ENCODE measurements at regions of chr6 and their contacts with region 1.

Region 1: DNA sequence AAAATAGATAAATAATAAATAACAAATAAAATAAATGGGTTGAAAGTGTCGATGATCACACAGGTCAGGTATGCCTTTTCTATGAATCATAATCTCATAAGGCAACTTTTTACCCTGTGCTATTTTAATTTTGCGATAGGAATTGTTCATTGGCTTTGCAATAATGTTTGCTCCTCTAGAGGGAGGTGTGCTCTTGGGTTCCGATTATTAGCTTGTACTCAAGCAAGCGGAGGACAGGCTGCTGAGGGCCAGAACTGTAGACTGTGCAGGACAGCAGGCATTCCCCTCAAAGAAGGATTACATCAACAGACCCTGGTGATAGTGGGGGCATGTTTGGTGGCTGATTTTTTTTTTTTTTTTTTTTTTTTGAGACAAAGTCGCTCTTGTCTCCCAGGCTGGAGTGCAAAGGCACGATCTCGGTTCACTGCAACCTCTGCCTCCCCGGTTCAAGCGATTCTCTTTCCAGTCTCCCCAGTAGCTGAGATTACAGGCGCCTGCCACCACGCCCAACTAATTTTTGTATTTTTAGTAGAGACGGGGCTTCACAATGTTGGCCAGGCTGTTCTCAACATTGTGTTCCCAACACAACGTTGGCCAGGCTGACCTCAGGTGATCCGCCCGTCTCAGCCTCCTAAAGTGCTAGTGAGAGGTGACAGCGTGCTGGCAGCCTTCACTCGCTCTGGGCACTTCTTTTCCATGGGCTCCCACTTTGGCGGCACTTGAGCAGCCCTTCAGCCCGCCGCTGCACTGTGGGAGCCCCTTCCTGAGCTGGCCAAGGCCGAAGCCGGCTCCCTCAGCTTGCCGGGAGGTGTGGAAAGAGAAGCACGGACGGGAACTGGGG is 35.6 kb downstream of the RIOK1 start:
- DNase-seq: no peak
- ATAC-seq: peak; percentile 38; the same call in 2 of the 3 replicates
- H3K4me3 ChIP-seq: no peak overlapping the region
- H3K27ac ChIP-seq: no peak overlapping the region
- H3K4me1 ChIP-seq: no peaks in the 10 kb centered on the region
- H3K27me3 ChIP-seq: no peaks in the 10 kb centered on the region
- CTCF ChIP-seq: peak; percentile 14 to 29 (median 24); a peak in 1 of 6 replicates
- EP300 ChIP-seq: no peak
- POLR2A ChIP-seq: no peak
- RAD21 ChIP-seq: peak; percentile 28

Region 2: GRCh38 chr6:7115543-7116231 is 309.5 kb before region 1 on chr6:
- CTCF ChIA-PET with region 1: no interaction called
- POLR2A ChIA-PET with region 1: no interaction called
- RAD21 ChIA-PET with region 1: no interaction called
- SMC1A ChIA-PET with region 1: no interaction called
- in situ Hi-C with region 1: no loop called
- intact Hi-C with region 1: no loop called
- DNase-seq: no peak
- ATAC-seq: no peak
- H3K4me3 ChIP-seq: no peak overlapping the region; the same call in 1 of the 2 replicates
- H3K27ac ChIP-seq: no peak overlapping the region
- H3K4me1 ChIP-seq: peaks cover 28% of the 10 kb centered on the region
- H3K27me3 ChIP-seq: no peaks in the 10 kb centered on the region
- CTCF ChIP-seq: no peak
- EP300 ChIP-seq: no peak
- POLR2A ChIP-seq: no peak
- RAD21 ChIP-seq: no peak

Region 3: GRCh38 chr6:7615611-7616383 is 190.6 kb after region 1 on chr6:
- CTCF ChIA-PET with region 1: no interaction called
- POLR2A ChIA-PET with region 1: no interaction called
- RAD21 ChIA-PET with region 1: interaction called, 3 read pairs
- SMC1A ChIA-PET with region 1: interaction called, 4 read pairs
- in situ Hi-C with region 1: no loop called
- intact Hi-C with region 1: loop called (anchors 10 kb)
- DNase-seq: no peak
- ATAC-seq: peak; percentile 57
- H3K4me3 ChIP-seq: no peak overlapping the region
- H3K27ac ChIP-seq: no peak overlapping the region
- H3K4me1 ChIP-seq: peaks cover 5% of the 10 kb centered on the region; the same call in 1 of the 2 replicates
- H3K27me3 ChIP-seq: no peaks in the 10 kb centered on the region
- CTCF ChIP-seq: peak; percentile 72 to 83 (median 75)
- EP300 ChIP-seq: no peak
- POLR2A ChIP-seq: no peak
- RAD21 ChIP-seq: peak; percentile 92

Measured in GM12878 (cell line).